ENCODE measurements at regions of chr21 and their contacts with region 1.

Region 1: GRCh38 chr21:33266050-33266788 is at the start of gene IL10RB:
- DNase-seq: peak; percentile 61 to 77 (median 68)
- H3K4me3 ChIP-seq: peak within 1 kb of the TSS; percentile 54 to 79
- H3K4me3 Mint-ChIP-seq: peak within 1 kb of the TSS; percentile 93 to 99 (median 96)
- H3K27ac ChIP-seq: peak within 1 kb of the TSS; percentile 80
- H3K27ac Mint-ChIP-seq: peak within 1 kb of the TSS; percentile 92 to 97 (median 95)
- H3K4me1 ChIP-seq: peaks cover 59% of the 10 kb centered on the region
- H3K4me1 Mint-ChIP-seq: peaks cover 38 to 74% (median 50%) of the 10 kb centered on the region in 4 donors
- H3K27me3 ChIP-seq: no peaks in the 10 kb centered on the region
- H3K27me3 Mint-ChIP-seq: no peaks in the 10 kb centered on the region
- total RNA-seq, gene IL10RB: 30.6 to 36.4 TPM

Region 2: DNA sequence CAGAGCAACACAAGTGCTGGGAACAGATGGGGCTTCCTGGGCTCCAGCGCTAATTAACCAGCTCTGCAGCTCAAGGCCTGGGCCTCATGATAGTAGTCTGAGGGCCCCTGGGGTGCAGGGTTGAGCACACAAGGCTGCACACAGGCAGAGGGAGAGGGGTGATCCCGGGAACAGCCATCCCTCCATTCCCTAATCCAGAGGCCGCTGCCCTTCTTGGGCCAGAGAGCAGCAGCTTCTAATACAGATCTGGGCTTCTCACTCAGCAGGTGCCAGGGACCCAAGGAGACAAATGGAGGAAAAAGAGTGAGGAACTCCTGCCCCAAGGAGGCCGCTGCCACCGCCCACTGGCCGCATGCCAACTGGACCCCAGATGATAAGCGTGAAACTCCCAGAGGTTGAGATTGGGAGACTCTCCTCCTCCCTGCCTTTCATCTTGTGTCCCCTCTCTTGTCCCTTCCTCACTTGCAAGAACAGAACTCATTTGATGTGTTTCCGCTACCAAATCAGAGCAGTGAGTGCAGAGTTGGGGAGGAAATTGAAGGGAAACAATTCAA is 94.5 kb before region 1 on chr21:
- CTCF ChIA-PET with region 1: no interaction called
- POLR2A ChIA-PET with region 1: no interaction called
- intact Hi-C with region 1: no loop called
- DNase-seq: no peak
- H3K4me3 ChIP-seq: no peak overlapping the region
- H3K4me3 Mint-ChIP-seq: no peak overlapping the region
- H3K27ac ChIP-seq: no peak overlapping the region
- H3K27ac Mint-ChIP-seq: no peak overlapping the region
- H3K4me1 ChIP-seq: no peaks in the 10 kb centered on the region
- H3K4me1 Mint-ChIP-seq: no peaks in the 10 kb centered on the region
- H3K27me3 ChIP-seq: no peaks in the 10 kb centered on the region
- H3K27me3 Mint-ChIP-seq: peaks cover 7 to 10% of the 10 kb centered on the region in 2 donors

Region 3: DNA sequence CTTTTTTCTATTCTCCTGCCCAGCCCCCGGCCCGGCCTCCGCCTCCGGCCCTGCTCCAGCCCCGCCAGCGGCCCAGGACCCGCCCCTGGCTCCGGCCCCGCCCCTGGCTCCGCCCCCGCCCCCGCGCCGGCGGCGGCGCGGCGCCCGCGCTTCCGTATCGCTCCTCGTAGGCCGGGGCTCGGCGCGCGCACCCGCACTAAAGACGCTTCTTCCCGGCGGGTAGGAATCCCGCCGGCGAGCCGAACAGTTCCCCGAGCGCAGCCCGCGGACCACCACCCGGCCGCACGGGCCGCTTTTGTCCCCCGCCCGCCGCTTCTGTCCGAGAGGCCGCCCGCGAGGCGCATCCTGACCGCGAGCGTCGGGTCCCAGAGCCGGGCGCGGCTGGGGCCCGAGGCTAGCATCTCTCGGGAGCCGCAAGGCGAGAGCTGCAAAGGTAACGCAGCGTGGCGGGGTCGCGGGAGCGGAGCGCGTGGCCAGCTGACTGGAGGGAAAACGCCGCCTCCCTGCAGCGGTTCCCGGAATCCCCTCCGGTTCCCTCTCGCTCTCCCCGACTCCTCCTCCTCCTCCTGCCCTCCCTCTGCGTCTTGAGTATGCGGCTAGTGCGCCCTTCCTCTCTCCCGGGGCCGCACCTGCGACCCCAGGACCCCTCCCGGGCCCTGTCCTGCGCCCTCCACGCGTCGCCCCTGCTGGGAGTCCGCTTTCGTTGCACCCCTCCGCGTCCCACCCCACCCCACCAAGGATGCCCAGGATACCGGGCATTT is 36.3 kb before region 1 on chr21 and contains the start of gene IFNAR2:
- CTCF ChIA-PET with region 1: interaction called, 5 read pairs
- POLR2A ChIA-PET with region 1: interaction called, 33 read pairs
- intact Hi-C with region 1: loop called (anchors 2 kb)
- DNase-seq: peak; percentile 63 to 73 (median 66)
- H3K4me3 ChIP-seq: peak within 1 kb of the TSS; percentile 70 to 87
- H3K4me3 Mint-ChIP-seq: peak within 1 kb of the TSS; percentile 89 to 97 (median 94)
- H3K27ac ChIP-seq: peak within 1 kb of the TSS; percentile 86
- H3K27ac Mint-ChIP-seq: peak within 1 kb of the TSS; percentile 90 to 96 (median 94)
- H3K4me1 ChIP-seq: peaks cover 41% of the 10 kb centered on the region
- H3K4me1 Mint-ChIP-seq: peaks cover 32 to 49% (median 39%) of the 10 kb centered on the region in 4 donors
- H3K27me3 ChIP-seq: no peaks in the 10 kb centered on the region
- H3K27me3 Mint-ChIP-seq: no peaks in the 10 kb centered on the region
- total RNA-seq, gene IFNAR2: 76.5 to 77.7 TPM

Region 4: GRCh38 chr21:33244082-33244778 is 22.0 kb before region 1 on chr21:
- CTCF ChIA-PET with region 1: no interaction called
- POLR2A ChIA-PET with region 1: interaction called, 18 read pairs
- intact Hi-C with region 1: loop called (anchors 2 kb)
- DNase-seq: no peak
- H3K4me3 ChIP-seq: peak overlapping the region in 1 of 2 donors; percentile 10
- H3K4me3 Mint-ChIP-seq: peak overlapping the region; percentile 31 to 89 (median 78)
- H3K27ac ChIP-seq: peak overlapping the region; percentile 16
- H3K27ac Mint-ChIP-seq: peak overlapping the region; percentile 87 to 96 (median 94)
- H3K4me1 ChIP-seq: peaks cover 94% of the 10 kb centered on the region
- H3K4me1 Mint-ChIP-seq: peaks cover 63 to 90% (median 76%) of the 10 kb centered on the region in 4 donors
- H3K27me3 ChIP-seq: no peaks in the 10 kb centered on the region
- H3K27me3 Mint-ChIP-seq: no peaks in the 10 kb centered on the region

Region 5: GRCh38 chr21:33299181-33299752 is 33.0 kb after region 1 on chr21:
- CTCF ChIA-PET with region 1: no interaction called
- POLR2A ChIA-PET with region 1: interaction called, 24 read pairs
- intact Hi-C with region 1: no loop called
- DNase-seq: peak; percentile 39 to 58 (median 41)
- H3K4me3 ChIP-seq: peak overlapping the region in 1 of 2 donors; percentile 19
- H3K4me3 Mint-ChIP-seq: peak overlapping the region; percentile 48 to 88 (median 70)
- H3K27ac ChIP-seq: peak overlapping the region; percentile 10
- H3K27ac Mint-ChIP-seq: peak overlapping the region; percentile 69 to 95 (median 84)
- H3K4me1 ChIP-seq: peaks cover 37% of the 10 kb centered on the region
- H3K4me1 Mint-ChIP-seq: peaks cover 33 to 64% (median 44%) of the 10 kb centered on the region in 4 donors
- H3K27me3 ChIP-seq: no peaks in the 10 kb centered on the region
- H3K27me3 Mint-ChIP-seq: no peaks in the 10 kb centered on the region

Measured in CD4-positive, alpha-beta memory T cell (primary cell).